ENCODE measurements at regions of chr1 and their contacts with region 1.

Region 1: GRCh38 chr1:200669314-200670241 is at the start of gene DDX59:
- DNase-seq: peak; percentile 81
- H3K4me3 ChIP-seq: peak within 1 kb of the TSS; percentile 79
- H3K27me3 ChIP-seq: no peaks in the 10 kb centered on the region
- CTCF ChIP-seq: no peak
- polyA plus RNA-seq, gene DDX59: 14.0 and 14.9 TPM in 2 replicates

Region 2: GRCh38 chr1:200802865-200803512 is 133.4 kb after region 1 on chr1:
- CTCF ChIA-PET with region 1: interaction called, 10 read pairs
- POLR2A ChIA-PET with region 1: no interaction called
- DNase-seq: no peak
- H3K4me3 ChIP-seq: no peak overlapping the region
- H3K27me3 ChIP-seq: no peaks in the 10 kb centered on the region
- CTCF ChIP-seq: peak; percentile 95

Measured in BJ (cell line).